ENCODE measurements at regions of chr21 and their contacts with region 1.

Region 1: GRCh38 chr21:37366482-37367316 is at the start of gene DYRK1A:
- DNase-seq: peak; percentile 97
- ATAC-seq: peak; percentile 79
- H3K4me3 Mint-ChIP-seq: peak within 1 kb of the TSS; percentile 99
- H3K27ac Mint-ChIP-seq: peak within 1 kb of the TSS; percentile 99
- H3K4me1 Mint-ChIP-seq: peaks cover 38% of the 10 kb centered on the region
- H3K27me3 Mint-ChIP-seq: no peaks in the 10 kb centered on the region
- total RNA-seq, gene DYRK1A: 109 to 122 TPM

Region 2: GRCh38 chr21:37445228-37445627 is 78.5 kb after region 1 on chr21:
- POLR2A ChIA-PET with region 1: no interaction called
- DNase-seq: no peak
- ATAC-seq: no peak
- H3K4me3 Mint-ChIP-seq: no peak overlapping the region
- H3K27ac Mint-ChIP-seq: no peak overlapping the region
- H3K4me1 Mint-ChIP-seq: peaks cover 28% of the 10 kb centered on the region
- H3K27me3 Mint-ChIP-seq: no peaks in the 10 kb centered on the region

Region 3: DNA sequence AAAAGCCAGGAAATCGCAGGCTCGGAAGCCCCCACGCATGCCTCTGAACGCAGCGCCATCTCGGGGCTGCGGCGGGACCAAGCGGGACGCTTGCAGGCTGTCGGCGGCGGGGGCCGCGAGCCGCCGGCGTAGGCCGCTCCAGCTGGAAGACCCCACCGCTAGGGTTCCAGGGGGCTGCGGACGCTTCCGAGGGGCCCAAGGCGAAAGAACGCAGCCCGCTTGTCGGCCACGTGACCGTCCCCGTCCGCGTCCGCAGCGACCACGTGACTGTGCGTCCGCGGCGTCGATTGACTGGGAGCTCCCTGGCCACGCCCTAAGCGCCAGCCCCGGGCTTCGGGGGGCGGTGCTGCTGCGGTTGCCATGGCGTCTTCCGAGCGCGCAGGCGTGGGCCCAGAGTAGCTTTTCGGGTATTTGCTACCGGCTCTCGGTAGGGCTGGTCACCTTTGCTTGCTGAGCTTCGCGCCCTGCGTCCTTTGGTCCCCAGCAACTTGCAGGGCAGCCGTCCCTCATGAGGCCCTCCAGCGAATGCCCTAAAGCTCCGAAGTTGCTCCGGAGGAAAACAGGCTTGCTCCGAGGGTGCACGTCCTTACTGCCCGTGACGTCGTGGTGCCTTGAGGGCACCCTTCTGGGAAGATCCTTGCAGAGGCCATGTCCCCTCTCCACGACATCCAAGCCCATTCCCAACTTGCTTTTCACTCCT is 197.1 kb after region 1 on chr21:
- POLR2A ChIA-PET with region 1: interaction called, 12 read pairs
- DNase-seq: peak; percentile 94
- ATAC-seq: peak; percentile 90
- H3K4me3 Mint-ChIP-seq: peak overlapping the region; percentile 95
- H3K27ac Mint-ChIP-seq: peak overlapping the region; percentile 99
- H3K4me1 Mint-ChIP-seq: peaks cover 23% of the 10 kb centered on the region
- H3K27me3 Mint-ChIP-seq: no peaks in the 10 kb centered on the region